Activated T-helper 1 cell treated with anti-CD3 and anti-CD28 coated beads, Interleukin-12 subunit alpha, Interleukin-12 subunit beta, Interleukin-2, Interleukin-4 antibody, amounts not matched to agents 30 ng/mL and 10 ng/mL and 1 ng/mL, durations not matched to agents 14 hours and 24 hours and 36 hours (primary cell): ENCODE measurements at regions of chr3 and their contacts with region 1.

Region 1: GRCh38 chr3:71710906-71711494 is 14.2 kb downstream of the EIF4E3 start:
- DNase-seq: no peak
- H3K4me3 Mint-ChIP-seq: no peak overlapping the region
- H3K27ac Mint-ChIP-seq: no peak overlapping the region
- H3K4me1 Mint-ChIP-seq: peaks cover 56% of the 10 kb centered on the region
- H3K27me3 Mint-ChIP-seq: no peaks in the 10 kb centered on the region

Region 2: DNA sequence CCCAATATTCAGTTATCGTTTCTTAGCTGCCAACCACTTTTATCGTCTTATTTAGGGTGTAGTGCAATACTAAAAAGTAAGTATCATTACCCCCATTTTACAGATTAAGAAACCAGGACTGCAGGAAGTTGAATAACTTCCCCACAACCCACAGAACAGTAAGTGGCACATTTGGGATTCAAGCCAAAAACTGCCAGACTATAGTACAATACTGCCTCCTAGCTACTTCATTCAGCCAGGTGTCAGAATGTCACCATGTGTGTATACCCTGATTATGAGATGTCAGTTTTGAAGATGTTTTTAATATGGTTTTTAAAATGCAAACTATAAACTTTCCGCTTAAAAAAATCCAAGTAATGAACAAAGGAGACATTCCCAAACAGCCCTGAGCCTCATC is 148.1 kb after region 1 on chr3:
- intact Hi-C with region 1: loop called (anchors 1 kb)
- DNase-seq: no peak
- H3K4me3 Mint-ChIP-seq: no peak overlapping the region
- H3K27ac Mint-ChIP-seq: no peak overlapping the region
- H3K4me1 Mint-ChIP-seq: peaks cover 5% of the 10 kb centered on the region
- H3K27me3 Mint-ChIP-seq: peaks cover 7% of the 10 kb centered on the region